Activated naive CD4-positive, alpha-beta T cell treated with anti-CD3 and anti-CD28 coated beads for 36 hours (primary cell): ENCODE measurements at regions of chr11 and their contacts with region 1.

Region 1: GRCh38 chr11:6353367-6353987 is 33.2 kb upstream of the CAVIN3 start:
- DNase-seq: peak; percentile 67
- H3K4me3 Mint-ChIP-seq: no peak overlapping the region
- H3K27ac Mint-ChIP-seq: no peak overlapping the region
- H3K4me1 Mint-ChIP-seq: peaks cover 9% of the 10 kb centered on the region
- H3K27me3 Mint-ChIP-seq: no peaks in the 10 kb centered on the region

Region 2: GRCh38 chr11:5476184-5476819 is 877.2 kb before region 1 on chr11:
- CTCF ChIA-PET with region 1: no interaction called
- intact Hi-C with region 1: loop called (anchors 2 kb)
- DNase-seq: peak; percentile 64
- H3K4me3 Mint-ChIP-seq: no peak overlapping the region
- H3K27ac Mint-ChIP-seq: no peak overlapping the region
- H3K4me1 Mint-ChIP-seq: no peaks in the 10 kb centered on the region
- H3K27me3 Mint-ChIP-seq: peaks cover 11% of the 10 kb centered on the region

Region 3: DNA sequence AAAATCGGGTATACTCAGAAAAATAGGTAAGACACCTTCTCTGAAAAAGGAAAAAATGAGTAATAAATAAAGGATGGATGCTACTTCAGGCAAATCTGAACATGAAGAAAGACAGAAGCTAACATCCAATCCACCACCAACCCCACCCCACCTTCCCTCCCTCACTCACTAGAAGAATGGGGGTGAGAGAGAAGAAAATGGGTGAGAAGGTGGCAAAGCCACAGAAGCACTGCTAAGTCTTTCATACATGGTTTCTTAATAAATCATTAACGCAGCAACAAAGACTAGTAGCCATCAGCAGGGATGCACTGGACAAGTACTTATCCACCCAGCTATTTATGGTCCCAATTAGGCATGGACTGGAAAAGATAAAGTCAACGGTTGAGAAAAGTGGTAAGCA is 125.0 kb before region 1 on chr11:
- CTCF ChIA-PET with region 1: no interaction called
- intact Hi-C with region 1: no loop called
- DNase-seq: no peak
- H3K4me3 Mint-ChIP-seq: no peak overlapping the region
- H3K27ac Mint-ChIP-seq: no peak overlapping the region
- H3K4me1 Mint-ChIP-seq: peaks cover 38% of the 10 kb centered on the region
- H3K27me3 Mint-ChIP-seq: no peaks in the 10 kb centered on the region

Region 4: GRCh38 chr11:6251120-6251733 is 102.2 kb before region 1 on chr11:
- CTCF ChIA-PET with region 1: interaction called, 105 read pairs
- intact Hi-C with region 1: loop called (anchors 1 kb)
- DNase-seq: peak; percentile 73
- H3K4me3 Mint-ChIP-seq: no peak overlapping the region
- H3K27ac Mint-ChIP-seq: no peak overlapping the region
- H3K4me1 Mint-ChIP-seq: no peaks in the 10 kb centered on the region
- H3K27me3 Mint-ChIP-seq: no peaks in the 10 kb centered on the region

Region 5: DNA sequence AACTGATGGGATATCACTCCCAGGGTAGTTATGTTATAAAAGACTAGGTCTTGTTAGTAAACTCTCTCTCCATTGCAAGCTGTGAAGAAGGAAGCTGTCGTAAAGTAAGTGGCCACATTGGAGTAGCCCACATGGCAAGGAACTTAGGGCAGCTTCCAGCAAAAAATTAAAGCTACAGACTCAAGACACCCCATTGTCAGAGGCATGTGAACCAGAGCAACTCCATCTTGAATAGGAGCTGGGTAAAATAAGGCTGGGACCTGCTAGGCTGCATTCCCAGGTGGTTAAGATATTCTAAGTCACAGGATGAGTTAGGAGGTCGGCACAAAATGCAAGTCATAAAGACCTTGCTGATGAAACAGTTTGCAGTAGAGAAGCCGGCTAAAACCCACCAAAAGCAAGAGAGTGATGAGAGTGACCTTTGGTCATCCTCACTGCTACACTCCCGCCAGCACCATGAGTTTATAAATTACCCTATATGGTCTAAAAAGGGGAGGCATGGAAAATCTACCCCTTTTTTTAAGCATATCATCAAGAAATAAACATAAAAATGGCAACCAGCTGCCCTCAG is 69.9 kb before region 1 on chr11:
- CTCF ChIA-PET with region 1: interaction called, 10 read pairs
- intact Hi-C with region 1: no loop called
- DNase-seq: no peak
- H3K4me3 Mint-ChIP-seq: no peak overlapping the region
- H3K27ac Mint-ChIP-seq: no peak overlapping the region
- H3K4me1 Mint-ChIP-seq: no peaks in the 10 kb centered on the region
- H3K27me3 Mint-ChIP-seq: peaks cover 35% of the 10 kb centered on the region